CD4-positive, alpha-beta memory T cell (primary cell): ENCODE measurements at regions of chr9 and their contacts with region 1.

Region 1: DNA sequence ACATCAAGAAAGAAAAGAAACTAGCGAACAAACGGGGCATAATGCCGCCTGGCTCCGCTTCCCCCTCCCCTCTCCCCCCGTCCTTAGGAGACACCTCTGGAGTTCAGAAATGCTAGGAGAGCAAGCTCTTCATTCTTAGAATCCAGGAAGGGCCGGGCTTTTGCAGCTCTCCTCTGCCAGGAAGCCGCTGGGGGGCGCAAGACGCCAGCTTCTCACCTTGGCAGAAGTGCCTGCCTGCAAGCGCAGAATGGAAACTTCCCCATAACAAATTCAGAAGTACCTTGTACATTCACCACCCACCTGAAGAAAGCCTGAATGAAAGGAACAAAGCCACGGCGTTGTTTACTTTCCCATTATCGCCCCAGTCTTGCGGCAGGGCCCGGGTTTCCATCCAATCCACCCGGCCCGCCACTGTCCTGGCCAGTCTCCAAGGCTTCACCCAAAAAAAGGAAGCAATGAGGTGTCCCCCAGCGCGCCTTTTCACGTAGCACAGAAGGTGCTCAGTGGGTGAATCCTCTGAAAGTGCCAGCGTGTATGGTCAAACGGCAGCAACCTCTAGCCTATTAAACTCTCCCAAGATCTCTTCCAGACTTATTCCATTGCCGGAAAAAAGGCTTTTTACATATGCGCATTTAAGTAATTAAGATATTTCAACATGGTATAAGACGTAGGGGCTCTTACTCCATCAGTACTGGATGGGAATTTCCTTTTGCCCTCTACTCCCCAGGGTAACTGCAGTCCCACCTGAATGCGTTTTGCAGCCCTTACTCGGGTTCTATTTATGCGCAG is 1.6 kb upstream of the GADD45G start:
- DNase-seq: peak; percentile 85 to 87 (median 85)
- H3K4me3 ChIP-seq: peak overlapping the region; percentile 57 to 79
- H3K4me3 Mint-ChIP-seq: peak overlapping the region; percentile 77 to 97 (median 86)
- H3K27ac ChIP-seq: no peak overlapping the region
- H3K27ac Mint-ChIP-seq: peak overlapping the region; percentile 54 to 98 (median 78)
- H3K4me1 ChIP-seq: peaks cover 35% of the 10 kb centered on the region
- H3K4me1 Mint-ChIP-seq: peaks cover 14 to 40% (median 17%) of the 10 kb centered on the region in 4 donors
- H3K27me3 ChIP-seq: no peaks in the 10 kb centered on the region
- H3K27me3 Mint-ChIP-seq: no peaks in the 10 kb centered on the region

Region 2: GRCh38 chr9:88645172-88645878 is 957.8 kb before region 1 on chr9:
- CTCF ChIA-PET with region 1: no interaction called
- POLR2A ChIA-PET with region 1: no interaction called
- intact Hi-C with region 1: no loop called
- DNase-seq: no peak
- H3K4me3 ChIP-seq: no peak overlapping the region
- H3K4me3 Mint-ChIP-seq: no peak overlapping the region
- H3K27ac ChIP-seq: no peak overlapping the region
- H3K27ac Mint-ChIP-seq: no peak overlapping the region
- H3K4me1 ChIP-seq: no peaks in the 10 kb centered on the region
- H3K4me1 Mint-ChIP-seq: no peaks in the 10 kb centered on the region
- H3K27me3 ChIP-seq: no peaks in the 10 kb centered on the region
- H3K27me3 Mint-ChIP-seq: peaks cover 13% of the 10 kb centered on the region in 2 donors

Region 3: DNA sequence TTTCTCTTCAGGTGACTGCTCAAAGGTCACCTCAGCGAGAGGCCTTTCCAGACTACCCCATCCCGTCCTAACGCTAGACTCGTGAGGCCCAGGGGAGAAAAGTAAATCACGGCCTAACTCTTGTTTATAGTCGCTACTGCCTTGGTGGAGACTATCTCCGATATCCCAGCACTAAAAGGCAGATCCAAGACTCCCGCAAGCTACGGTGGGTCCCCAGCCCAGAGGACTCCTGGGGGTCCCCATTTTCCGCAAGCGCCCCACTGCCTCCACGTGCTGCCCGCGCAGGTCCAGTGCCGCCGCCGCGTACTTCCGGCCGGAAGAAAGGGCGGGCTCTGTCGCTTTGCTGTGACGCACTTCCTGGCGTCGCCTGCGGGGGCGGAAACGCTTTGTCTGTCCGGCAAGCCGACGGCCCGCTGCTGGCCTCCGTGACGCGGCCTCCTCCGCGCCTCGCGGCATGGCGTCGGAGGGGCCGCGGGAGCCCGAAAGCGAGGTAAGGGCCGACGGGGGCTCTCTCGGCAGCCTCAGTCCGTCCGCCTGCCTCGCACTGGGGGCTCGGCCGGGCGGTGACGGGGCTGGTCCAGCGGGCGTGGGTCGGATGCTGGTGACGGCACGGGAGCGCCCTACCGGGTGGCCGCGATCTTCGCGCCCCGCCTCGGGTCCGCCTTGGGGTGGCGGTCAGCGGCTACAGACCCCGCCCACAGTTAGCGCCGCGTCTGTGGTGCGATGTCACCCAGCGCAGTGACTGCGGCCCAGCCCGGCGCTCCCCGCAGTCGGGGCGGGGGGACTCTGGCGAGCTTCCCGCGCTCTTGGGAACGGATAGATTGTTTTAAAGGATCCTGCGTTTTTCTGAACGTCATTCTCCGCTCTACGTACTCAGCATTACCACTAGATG is 284.8 kb before region 1 on chr9 and contains the start of gene SECISBP2:
- CTCF ChIA-PET with region 1: no interaction called
- POLR2A ChIA-PET with region 1: no interaction called
- intact Hi-C with region 1: loop called (anchors 1 kb)
- DNase-seq: peak; percentile 94 to 97 (median 94)
- H3K4me3 ChIP-seq: peak within 1 kb of the TSS; percentile 67 to 76
- H3K4me3 Mint-ChIP-seq: peak within 1 kb of the TSS; percentile 83 to 94 (median 92)
- H3K27ac ChIP-seq: peak within 1 kb of the TSS; percentile 100
- H3K27ac Mint-ChIP-seq: peak within 1 kb of the TSS; percentile 91 to 99 (median 98)
- H3K4me1 ChIP-seq: peaks cover 55% of the 10 kb centered on the region
- H3K4me1 Mint-ChIP-seq: peaks cover 38 to 69% (median 54%) of the 10 kb centered on the region in 4 donors
- H3K27me3 ChIP-seq: no peaks in the 10 kb centered on the region
- H3K27me3 Mint-ChIP-seq: peaks cover 0 to under 1% of the 10 kb centered on the region in 2 donors
- total RNA-seq, gene SECISBP2: 96.5 to 112 TPM

Region 4: DNA sequence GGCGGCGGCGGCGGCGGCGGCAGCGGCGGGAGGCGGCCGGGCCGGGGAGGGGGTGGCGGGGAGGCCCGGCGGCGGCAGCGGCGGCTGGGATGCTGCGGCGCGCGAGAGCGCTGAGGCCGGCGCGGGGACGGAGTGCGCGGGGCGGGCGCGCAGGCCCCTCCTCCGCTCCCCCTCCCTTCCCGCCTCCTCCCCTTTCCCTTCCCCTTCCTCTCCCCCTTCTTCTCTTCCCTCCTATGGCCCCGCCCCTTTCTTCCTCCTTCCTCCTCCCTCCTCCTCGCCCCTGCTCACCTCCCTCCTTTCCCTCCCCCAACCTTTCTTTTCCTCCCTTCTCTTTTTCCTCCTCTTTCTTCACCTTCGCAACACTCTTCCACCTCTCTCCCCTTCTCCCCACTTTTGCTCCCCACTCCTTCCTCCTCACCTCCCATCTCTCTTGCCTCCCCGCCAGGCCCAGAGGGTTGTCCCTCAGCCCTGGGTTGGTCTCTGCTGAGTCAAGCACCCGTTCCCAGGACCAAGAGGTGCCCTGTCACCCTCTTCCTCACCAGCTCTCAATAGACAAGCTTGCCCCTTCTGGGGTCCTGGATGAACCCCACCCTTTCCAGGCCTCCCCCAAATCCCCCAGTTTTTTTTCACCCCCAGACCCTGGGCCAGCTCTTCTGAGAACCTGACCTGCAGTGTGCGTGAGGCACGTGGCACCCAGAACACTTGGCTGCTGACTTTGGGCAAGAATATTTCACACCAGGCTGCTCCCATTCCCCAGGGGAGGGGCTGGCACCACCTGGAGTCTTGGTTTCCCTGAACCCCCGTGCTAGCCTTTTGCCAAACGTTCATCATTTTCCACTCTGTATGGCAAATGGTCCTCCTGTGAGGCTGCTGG is 105.0 kb before region 1 on chr9 and contains the start of gene SEMA4D:
- CTCF ChIA-PET with region 1: no interaction called
- POLR2A ChIA-PET with region 1: no interaction called
- intact Hi-C with region 1: no loop called
- DNase-seq: peak in 3 of 5 donors; percentile 28 to 68 (median 37)
- H3K4me3 ChIP-seq: peak within 1 kb of the TSS; percentile 89 to 98
- H3K4me3 Mint-ChIP-seq: peak within 1 kb of the TSS; percentile 94 to 100 (median 98)
- H3K27ac ChIP-seq: peak within 1 kb of the TSS; percentile 72
- H3K27ac Mint-ChIP-seq: peak within 1 kb of the TSS; percentile 94 to 98 (median 96)
- H3K4me1 ChIP-seq: peaks cover 86% of the 10 kb centered on the region
- H3K4me1 Mint-ChIP-seq: peaks cover 71 to 93% (median 81%) of the 10 kb centered on the region in 4 donors
- H3K27me3 ChIP-seq: no peaks in the 10 kb centered on the region
- H3K27me3 Mint-ChIP-seq: no peaks in the 10 kb centered on the region
- total RNA-seq, gene SEMA4D: 393 to 410 TPM

Region 5: DNA sequence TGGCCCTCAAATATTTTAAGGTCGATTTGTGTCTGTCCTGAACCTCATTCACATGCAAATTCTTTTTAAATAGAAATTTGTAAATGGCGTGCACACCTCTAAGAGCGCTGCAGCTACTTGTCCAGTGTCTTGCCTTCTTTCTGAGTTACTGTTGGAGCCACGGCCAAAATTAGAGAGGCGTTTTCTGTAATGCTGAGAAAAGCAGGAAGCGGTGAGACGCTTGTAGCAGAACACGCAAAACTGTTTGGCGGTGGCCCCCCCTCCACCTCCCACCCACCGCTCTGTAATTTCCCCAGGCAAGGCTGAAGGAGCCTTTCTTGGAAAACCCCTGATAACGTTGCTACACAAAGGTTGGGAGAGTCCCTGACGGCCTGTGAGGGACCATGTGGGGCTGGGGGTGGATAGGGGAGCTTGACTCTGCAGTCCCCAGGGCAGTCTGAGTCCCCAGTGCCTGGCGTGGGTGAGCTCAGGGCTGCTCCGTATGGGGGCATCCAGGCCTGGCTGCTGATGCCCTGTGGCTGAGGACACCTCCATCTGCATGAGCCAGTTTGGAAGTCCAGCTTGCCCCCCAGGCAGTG is 98.1 kb after region 1 on chr9:
- CTCF ChIA-PET with region 1: interaction called, 3 read pairs
- POLR2A ChIA-PET with region 1: interaction called, 3 read pairs
- intact Hi-C with region 1: loop called (anchors 2 kb)
- DNase-seq: peak; percentile 50 to 91 (median 56)
- H3K4me3 ChIP-seq: peak overlapping the region in 1 of 2 donors; percentile 12
- H3K4me3 Mint-ChIP-seq: peak overlapping the region; percentile 55 to 83 (median 68)
- H3K27ac ChIP-seq: peak overlapping the region; percentile 51
- H3K27ac Mint-ChIP-seq: peak overlapping the region; percentile 16 to 91 (median 83)
- H3K4me1 ChIP-seq: peaks cover 20% of the 10 kb centered on the region
- H3K4me1 Mint-ChIP-seq: peaks cover 15 to 35% (median 19%) of the 10 kb centered on the region in 4 donors
- H3K27me3 ChIP-seq: no peaks in the 10 kb centered on the region
- H3K27me3 Mint-ChIP-seq: no peaks in the 10 kb centered on the region

Region 6: DNA sequence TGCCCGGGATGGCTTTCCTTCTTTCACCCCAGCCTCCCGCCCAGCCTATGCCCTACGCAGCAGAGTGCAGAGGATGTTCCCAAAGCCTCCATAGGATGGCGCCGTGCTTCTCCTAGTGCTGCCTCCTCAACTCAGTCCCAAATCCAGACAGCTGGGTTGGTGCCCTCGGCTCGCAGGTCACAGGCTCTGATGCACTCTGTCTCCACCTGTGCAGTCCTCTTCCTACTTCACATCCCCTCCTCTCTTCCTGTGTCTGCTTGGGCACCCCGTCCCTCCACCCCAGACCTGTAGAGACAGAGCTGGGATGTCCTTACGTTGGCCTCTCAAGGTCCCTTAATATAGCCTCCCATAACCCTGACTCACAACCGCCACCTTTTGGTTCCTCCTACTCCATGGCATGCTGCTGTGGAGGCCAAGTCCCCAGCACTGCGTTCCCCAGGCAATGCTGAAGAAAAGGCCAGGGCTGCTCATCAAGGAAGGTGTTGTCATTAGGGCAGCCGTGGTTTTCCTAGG is 316.1 kb after region 1 on chr9:
- CTCF ChIA-PET with region 1: interaction called, 107 read pairs
- POLR2A ChIA-PET with region 1: interaction called, 5 read pairs
- intact Hi-C with region 1: loop called (anchors 1 kb)
- DNase-seq: peak in 4 of 5 donors; percentile 8 to 32 (median 22)
- H3K4me3 ChIP-seq: no peak overlapping the region
- H3K4me3 Mint-ChIP-seq: no peak overlapping the region
- H3K27ac ChIP-seq: no peak overlapping the region
- H3K27ac Mint-ChIP-seq: no peak overlapping the region
- H3K4me1 ChIP-seq: no peaks in the 10 kb centered on the region
- H3K4me1 Mint-ChIP-seq: peaks cover 4 to 13% (median 7%) of the 10 kb centered on the region in 4 donors
- H3K27me3 ChIP-seq: no peaks in the 10 kb centered on the region
- H3K27me3 Mint-ChIP-seq: peaks cover 2 to 8% of the 10 kb centered on the region in 2 donors

Region 7: DNA sequence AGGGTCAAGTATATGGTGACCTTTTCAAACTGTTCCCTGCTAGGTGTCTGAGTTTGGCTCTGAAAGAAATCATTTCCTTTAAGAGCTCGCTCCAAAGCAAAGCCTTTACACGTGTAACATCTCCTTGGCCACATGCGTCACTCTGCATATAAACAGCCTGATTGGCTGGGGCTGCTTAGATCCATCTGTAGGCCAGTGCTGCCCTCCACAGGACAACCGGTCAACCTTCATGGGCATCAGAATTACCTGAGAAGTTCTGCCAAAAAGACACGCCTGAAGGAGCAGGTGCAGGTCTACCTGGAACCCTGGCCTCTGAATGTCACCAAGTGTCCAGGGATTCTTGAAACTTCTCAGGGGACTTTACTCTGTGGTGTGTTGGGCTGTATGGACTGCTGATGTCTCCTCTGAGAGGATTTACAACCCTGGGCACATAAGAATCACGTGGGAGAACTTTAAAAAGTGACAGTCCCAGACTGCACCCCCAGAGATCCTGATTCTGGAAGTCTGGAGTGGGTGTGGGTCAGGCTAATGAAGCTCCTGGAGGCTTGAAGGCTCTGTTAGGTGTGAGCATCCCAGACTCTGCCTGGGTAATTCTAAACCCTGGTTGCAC is 499.2 kb after region 1 on chr9:
- CTCF ChIA-PET with region 1: interaction called, 94 read pairs
- POLR2A ChIA-PET with region 1: interaction called, 8 read pairs
- intact Hi-C with region 1: loop called (anchors 1 kb)
- DNase-seq: peak; percentile 74 to 83 (median 79)
- H3K4me3 ChIP-seq: no peak overlapping the region
- H3K4me3 Mint-ChIP-seq: no peak overlapping the region
- H3K27ac ChIP-seq: no peak overlapping the region
- H3K27ac Mint-ChIP-seq: peak overlapping the region in 3 of 7 donors; percentile 28 to 53 (median 41)
- H3K4me1 ChIP-seq: no peaks in the 10 kb centered on the region
- H3K4me1 Mint-ChIP-seq: peaks cover 0 to 6% (median 3%) of the 10 kb centered on the region in 4 donors
- H3K27me3 ChIP-seq: no peaks in the 10 kb centered on the region
- H3K27me3 Mint-ChIP-seq: peaks cover 0 to 4% of the 10 kb centered on the region in 2 donors

Region 8: GRCh38 chr9:90870621-90871326 is 1267.6 kb after region 1 on chr9:
- CTCF ChIA-PET with region 1: interaction called, 29 read pairs
- POLR2A ChIA-PET with region 1: no interaction called
- intact Hi-C with region 1: loop called (anchors 1 kb)
- DNase-seq: peak in 4 of 5 donors; percentile 37 to 42 (median 40)
- H3K4me3 ChIP-seq: no peak overlapping the region
- H3K4me3 Mint-ChIP-seq: no peak overlapping the region
- H3K27ac ChIP-seq: no peak overlapping the region
- H3K27ac Mint-ChIP-seq: no peak overlapping the region
- H3K4me1 ChIP-seq: no peaks in the 10 kb centered on the region
- H3K4me1 Mint-ChIP-seq: peaks cover 0 to 7% (median 0%) of the 10 kb centered on the region in 4 donors
- H3K27me3 ChIP-seq: no peaks in the 10 kb centered on the region
- H3K27me3 Mint-ChIP-seq: peaks cover 7% of the 10 kb centered on the region in 2 donors